Heart left ventricle (tissue), 16 donors: ENCODE measurements at regions of chr17 and their contacts with region 1.

Region 1: DNA sequence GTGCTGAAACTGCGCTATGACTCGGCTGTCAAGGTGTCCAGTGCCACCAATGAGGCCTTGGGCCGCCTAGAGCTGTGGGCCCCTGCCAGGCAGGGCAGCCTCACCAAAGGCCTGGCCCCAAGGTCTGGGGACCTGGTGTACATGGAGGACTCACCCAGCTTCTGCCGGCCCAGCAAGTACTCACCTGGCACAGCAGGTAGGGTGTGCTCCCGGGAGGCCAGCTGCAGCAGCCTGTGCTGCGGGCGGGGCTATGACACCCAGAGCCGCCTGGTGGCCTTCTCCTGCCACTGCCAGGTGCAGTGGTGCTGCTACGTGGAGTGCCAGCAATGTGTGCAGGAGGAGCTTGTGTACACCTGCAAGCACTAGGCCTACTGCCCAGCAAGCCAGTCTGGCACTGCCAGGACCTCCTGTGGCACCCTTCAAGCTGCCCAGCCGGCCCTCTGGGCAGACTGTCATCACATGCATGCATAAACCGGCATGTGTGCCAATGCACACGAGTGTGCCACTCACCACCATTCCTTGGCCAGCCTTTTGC is 25.0 kb downstream of the WNT9B start:
- DNase-seq: no peak
- ATAC-seq: no peak
- H3K4me3 ChIP-seq: no peak overlapping the region
- H3K27ac ChIP-seq: peak overlapping the region in 1 of 12 donors; percentile 90
- H3K4me1 ChIP-seq: peaks cover 0 to 40% (median 0%) of the 10 kb centered on the region in 12 donors
- H3K27me3 ChIP-seq: no peaks in the 10 kb centered on the region
- CTCF ChIP-seq: peak in 1 of 12 donors; percentile 4
- POLR2A ChIP-seq: no peak

Region 2: GRCh38 chr17:46818319-46818928 is 58.0 kb before region 1 on chr17 and contains the start of gene WNT3:
- intact Hi-C with region 1: loop called in 1 of 10 experiments (anchors 10 kb)
- DNase-seq: peak in 1 of 5 donors; percentile 72
- ATAC-seq: no peak
- H3K4me3 ChIP-seq: peak within 1 kb of the TSS; percentile 8 to 53 (median 38)
- H3K27ac ChIP-seq: no peak within 1 kb of the TSS
- H3K4me1 ChIP-seq: peaks cover 0 to 35% (median 19%) of the 10 kb centered on the region in 12 donors
- H3K27me3 ChIP-seq: peaks cover 48 to 96% (median 70%) of the 10 kb centered on the region in 9 donors
- CTCF ChIP-seq: no peak
- POLR2A ChIP-seq: no peak
- total RNA-seq, gene WNT3: 0.32 to 2.2 (median 1.2) TPM

Region 3: GRCh38 chr17:46916211-46916610 is 39.8 kb after region 1 on chr17:
- intact Hi-C with region 1: no loop called
- DNase-seq: no peak
- ATAC-seq: no peak
- H3K4me3 ChIP-seq: no peak overlapping the region
- H3K27ac ChIP-seq: no peak overlapping the region
- H3K4me1 ChIP-seq: no peaks in the 10 kb centered on the region
- H3K27me3 ChIP-seq: no peaks in the 10 kb centered on the region
- CTCF ChIP-seq: no peak
- POLR2A ChIP-seq: no peak

Region 4: GRCh38 chr17:47057830-47058229 is 181.4 kb after region 1 on chr17:
- intact Hi-C with region 1: no loop called
- DNase-seq: peak in 1 of 5 donors; percentile 41
- ATAC-seq: peak in 3 of 4 donors; percentile 33 to 68 (median 49)
- H3K4me3 ChIP-seq: no peak overlapping the region
- H3K27ac ChIP-seq: no peak overlapping the region
- H3K4me1 ChIP-seq: peaks cover 0 to 6% (median 0%) of the 10 kb centered on the region in 12 donors
- H3K27me3 ChIP-seq: no peaks in the 10 kb centered on the region
- CTCF ChIP-seq: no peak
- POLR2A ChIP-seq: no peak